Right cardiac atrium (tissue), 5 donors: ENCODE measurements at regions of chr20 and their contacts with region 1.

Region 1: GRCh38 chr20:20237093-20237959 is 130.6 kb upstream of the INSM1 start:
- DNase-seq: no peak
- ATAC-seq: peak; percentile 54 to 55
- H3K4me3 ChIP-seq: no peak overlapping the region
- H3K27ac ChIP-seq: no peak overlapping the region
- H3K4me1 ChIP-seq: no peaks in the 10 kb centered on the region
- H3K27me3 ChIP-seq: no peaks in the 10 kb centered on the region

Region 2: GRCh38 chr20:20083807-20084206 is 153.5 kb before region 1 on chr20:
- intact Hi-C with region 1: loop called in 3 of 4 experiments (anchors 2 to 5 kb)
- DNase-seq: no peak
- ATAC-seq: peak; percentile 45 to 47
- H3K4me3 ChIP-seq: no peak overlapping the region
- H3K27ac ChIP-seq: no peak overlapping the region
- H3K4me1 ChIP-seq: no peaks in the 10 kb centered on the region
- H3K27me3 ChIP-seq: no peaks in the 10 kb centered on the region

Region 3: DNA sequence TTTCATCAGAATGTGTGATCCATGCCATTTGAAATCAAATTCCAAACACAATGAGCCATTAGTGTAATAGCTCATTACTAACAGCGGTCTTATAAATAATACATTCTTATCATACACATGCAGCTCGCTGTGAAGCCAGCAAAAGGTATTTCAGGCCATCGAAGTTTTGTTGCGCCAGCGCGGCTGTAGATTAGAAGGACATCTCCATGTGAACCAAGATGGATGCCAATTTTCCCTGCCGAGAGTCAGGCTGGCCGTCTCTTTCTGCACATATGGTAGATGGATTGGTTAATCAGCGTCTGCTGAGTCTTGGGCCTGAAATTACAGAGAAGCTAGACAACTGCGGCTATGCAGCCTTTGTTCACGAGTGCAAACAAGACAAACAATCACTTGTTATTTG is 140.9 kb before region 1 on chr20:
- intact Hi-C with region 1: loop called in 1 of 4 experiments (anchors 10 kb)
- DNase-seq: no peak
- ATAC-seq: no peak
- H3K4me3 ChIP-seq: no peak overlapping the region
- H3K27ac ChIP-seq: no peak overlapping the region
- H3K4me1 ChIP-seq: no peaks in the 10 kb centered on the region
- H3K27me3 ChIP-seq: no peaks in the 10 kb centered on the region